Activated CD8-positive, alpha-beta memory T cell treated with anti-CD3 and anti-CD28 coated beads, Interleukin-2, amount 10 ng/mL, durations not matched to agents 7 days and 5 days (primary cell): ENCODE measurements at regions of chr22 and their contacts with region 1.

Region 1: DNA sequence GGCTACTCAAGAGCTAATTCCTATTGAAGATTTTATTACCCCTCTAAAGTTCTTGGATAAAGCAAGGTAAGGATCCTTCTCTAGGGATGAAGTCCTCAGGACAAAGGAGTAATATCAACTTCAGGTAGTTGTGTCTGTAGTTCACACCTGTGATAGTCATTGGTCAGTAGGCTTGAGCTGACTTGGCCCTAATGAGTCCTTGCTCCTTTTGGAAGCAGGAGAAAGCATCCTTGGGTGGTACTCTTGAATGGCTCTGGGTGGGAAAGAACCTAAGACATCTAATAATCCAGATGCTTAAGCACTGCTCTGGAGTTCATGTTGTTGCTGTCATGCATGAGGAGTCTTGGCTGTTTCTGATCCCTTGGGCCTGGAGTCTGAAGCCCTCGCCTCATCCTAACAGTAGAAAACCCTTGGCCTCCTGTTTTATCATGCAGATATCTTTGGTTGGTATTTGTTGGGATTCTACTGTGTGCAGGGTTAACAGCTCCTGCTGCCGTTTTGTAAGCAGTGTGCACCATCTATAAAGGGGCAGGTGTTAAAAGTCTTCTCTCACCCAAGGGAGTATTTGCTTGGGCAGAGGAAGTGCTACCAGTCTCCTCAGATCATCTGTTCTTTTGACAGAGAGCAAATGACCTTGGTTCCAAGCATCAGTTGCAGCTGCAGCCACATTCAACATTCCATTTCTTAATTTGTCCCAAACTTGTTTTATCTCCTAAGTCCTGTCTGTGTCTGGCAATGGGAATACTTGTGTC is 2.7 kb downstream of the MRPL40 start:
- DNase-seq: no peak
- ATAC-seq: no peak
- H3K4me3 Mint-ChIP-seq: no peak overlapping the region
- H3K27ac Mint-ChIP-seq: no peak overlapping the region
- H3K4me1 Mint-ChIP-seq: peaks cover 22% of the 10 kb centered on the region
- H3K27me3 Mint-ChIP-seq: no peaks in the 10 kb centered on the region

Region 2: GRCh38 chr22:19447388-19448075 is 12.5 kb after region 1 on chr22 and contains the start of gene C22orf39:
- CTCF ChIA-PET with region 1: interaction called, 11 read pairs
- DNase-seq: peak; percentile 94
- ATAC-seq: peak; percentile 95
- H3K4me3 Mint-ChIP-seq: peak within 1 kb of the TSS; percentile 91
- H3K27ac Mint-ChIP-seq: peak within 1 kb of the TSS; percentile 95
- H3K4me1 Mint-ChIP-seq: peaks cover 33% of the 10 kb centered on the region
- H3K27me3 Mint-ChIP-seq: no peaks in the 10 kb centered on the region
- total RNA-seq, gene C22orf39: 31.1 to 36.4 TPM